ENCODE measurements at regions of chr1 and their contacts with region 1.

Region 1: DNA sequence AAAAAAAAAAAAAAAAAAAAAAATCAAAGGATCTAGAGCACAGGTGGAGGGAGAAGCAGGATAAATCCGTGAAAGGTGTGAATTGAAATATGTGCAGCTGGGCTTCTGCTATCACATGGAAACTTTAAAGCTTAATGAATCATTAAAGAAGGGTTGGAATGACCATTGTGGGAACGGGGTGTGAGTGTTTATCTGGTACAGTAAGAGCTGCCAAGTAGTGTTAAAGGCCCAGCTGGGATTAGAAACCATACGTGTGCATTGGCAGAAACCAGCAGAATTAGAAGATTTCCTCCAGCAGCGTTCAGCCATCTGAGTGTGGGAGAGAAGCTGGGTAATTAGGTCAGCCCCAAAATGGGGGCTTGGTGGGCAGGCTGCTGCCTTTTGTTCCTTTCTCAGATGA is 13.5 kb downstream of the FALEC start:
- DNase-seq: peak; percentile 58

Region 2: GRCh38 chr1:150486964-150487762 is 41.9 kb before region 1 on chr1 and contains the start of gene TARS2:
- in situ Hi-C with region 1: loop called (anchors 5 kb)
- DNase-seq: peak; percentile 99
- total RNA-seq, gene TARS2: 34.6 and 36.7 TPM in 2 replicates